PC-3 (cell line): ENCODE measurements at regions of chr14 and their contacts with region 1.

Region 1: GRCh38 chr14:44564929-44565328 is 57.8 kb upstream of the FSCB start:
- DNase-seq: peak; percentile 78
- ATAC-seq: peak; percentile 95
- H3K4me3 ChIP-seq: 0 out of 2 replicates have a peak overlapping the region, but pooled peaks have one; percentile 19
- H3K27ac ChIP-seq: peak overlapping the region; percentile 48
- H3K4me1 ChIP-seq: peaks cover 27% of the 10 kb centered on the region
- H3K27me3 ChIP-seq: no peaks in the 10 kb centered on the region
- CTCF ChIP-seq: no peak

Region 2: GRCh38 chr14:44010071-44010470 is 554.9 kb before region 1 on chr14:
- CTCF ChIA-PET with region 1: no interaction called
- POLR2A ChIA-PET with region 1: no interaction called
- intact Hi-C with region 1: no loop called
- DNase-seq: no peak
- ATAC-seq: peak; percentile 51
- H3K4me3 ChIP-seq: no peak overlapping the region
- H3K27ac ChIP-seq: no peak overlapping the region
- H3K4me1 ChIP-seq: no peaks in the 10 kb centered on the region
- H3K27me3 ChIP-seq: no peaks in the 10 kb centered on the region
- CTCF ChIP-seq: no peak

Region 3: GRCh38 chr14:44180975-44181374 is 384.0 kb before region 1 on chr14:
- CTCF ChIA-PET with region 1: no interaction called
- POLR2A ChIA-PET with region 1: no interaction called
- intact Hi-C with region 1: loop called (anchors 5 kb)
- DNase-seq: peak; percentile 8
- ATAC-seq: peak; percentile 79
- H3K4me3 ChIP-seq: no peak overlapping the region
- H3K27ac ChIP-seq: no peak overlapping the region
- H3K4me1 ChIP-seq: no peaks in the 10 kb centered on the region; the same call in 1 of the 2 replicates
- H3K27me3 ChIP-seq: no peaks in the 10 kb centered on the region
- CTCF ChIP-seq: no peak

Region 4: GRCh38 chr14:46464341-46464740 is 1899.4 kb after region 1 on chr14:
- CTCF ChIA-PET with region 1: no interaction called
- POLR2A ChIA-PET with region 1: no interaction called
- intact Hi-C with region 1: no loop called
- DNase-seq: no peak
- ATAC-seq: no peak
- H3K4me3 ChIP-seq: no peak overlapping the region
- H3K27ac ChIP-seq: no peak overlapping the region
- H3K4me1 ChIP-seq: no peaks in the 10 kb centered on the region
- H3K27me3 ChIP-seq: no peaks in the 10 kb centered on the region
- CTCF ChIP-seq: no peak